HEK293 (cell line): ENCODE measurements at regions of chr17 and their contacts with region 1.

Region 1: GRCh38 chr17:41688699-41689496 is at the start of gene EIF1:
- H3K4me3 ChIP-seq: peak within 1 kb of the TSS; percentile 96
- H3K27ac ChIP-seq: peak within 1 kb of the TSS; percentile 89
- H3K4me1 ChIP-seq: no peaks in the 10 kb centered on the region
- CTCF ChIP-seq: 0 out of 2 replicates have a peak, but pooled peaks have one; percentile 17

Region 2: DNA sequence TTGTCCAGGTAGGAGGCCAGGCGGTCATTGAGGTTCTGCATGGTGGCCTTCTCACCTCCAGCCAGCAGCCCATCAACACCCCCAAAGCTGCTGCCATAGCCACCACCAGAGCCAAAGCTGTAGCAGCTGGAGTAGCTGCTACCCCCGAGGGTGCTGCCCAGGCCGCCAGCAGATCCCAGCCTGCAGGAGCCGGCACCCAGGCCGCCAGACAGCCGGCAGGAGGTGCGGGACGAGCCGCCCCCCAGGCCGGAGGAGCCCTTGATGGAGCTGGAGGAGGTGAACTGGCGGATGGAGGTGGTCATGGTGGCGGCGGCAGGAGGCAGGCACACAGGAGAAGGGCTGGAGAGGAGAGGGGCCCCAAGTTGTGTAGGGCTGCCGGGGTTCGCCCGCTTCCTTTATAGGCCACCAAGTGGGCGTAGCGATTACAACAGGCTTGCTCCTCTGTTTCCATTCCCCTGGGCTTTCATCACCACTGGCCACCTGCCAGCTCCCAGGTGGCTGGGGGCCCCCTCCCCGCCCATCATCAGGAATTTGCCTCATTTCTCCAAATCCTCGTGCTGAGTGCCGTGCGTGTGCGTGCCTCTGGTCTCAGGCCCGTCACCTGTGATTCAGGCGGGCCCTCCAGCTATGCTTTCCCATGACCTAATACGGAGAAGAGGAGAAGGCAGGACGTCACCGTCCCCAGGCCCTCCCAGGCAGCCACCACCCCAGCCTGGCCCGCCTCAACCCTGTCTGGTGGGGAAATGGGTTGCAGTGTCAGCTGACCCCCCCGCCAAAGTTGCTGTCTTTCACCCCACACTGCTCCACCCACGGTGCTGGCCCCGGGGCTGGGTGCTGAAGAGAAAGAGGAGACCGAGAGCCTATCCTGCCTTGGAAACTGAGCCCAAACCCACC is 64.4 kb before region 1 on chr17 and contains the start of gene KRT17:
- CTCF ChIA-PET with region 1: no interaction called
- POLR2A ChIA-PET with region 1: interaction called, 19 read pairs
- H3K4me3 ChIP-seq: peak within 1 kb of the TSS; percentile 26
- H3K27ac ChIP-seq: no peak within 1 kb of the TSS
- H3K4me1 ChIP-seq: peaks cover 2% of the 10 kb centered on the region; the same call in 1 of the 2 replicates
- CTCF ChIP-seq: no peak

Region 3: GRCh38 chr17:41710468-41711090 is 21.7 kb after region 1 on chr17:
- CTCF ChIA-PET with region 1: interaction called, 103 read pairs
- POLR2A ChIA-PET with region 1: interaction called, 24 read pairs
- H3K4me3 ChIP-seq: no peak overlapping the region
- H3K27ac ChIP-seq: no peak overlapping the region
- H3K4me1 ChIP-seq: no peaks in the 10 kb centered on the region
- CTCF ChIP-seq: no peak

Region 4: DNA sequence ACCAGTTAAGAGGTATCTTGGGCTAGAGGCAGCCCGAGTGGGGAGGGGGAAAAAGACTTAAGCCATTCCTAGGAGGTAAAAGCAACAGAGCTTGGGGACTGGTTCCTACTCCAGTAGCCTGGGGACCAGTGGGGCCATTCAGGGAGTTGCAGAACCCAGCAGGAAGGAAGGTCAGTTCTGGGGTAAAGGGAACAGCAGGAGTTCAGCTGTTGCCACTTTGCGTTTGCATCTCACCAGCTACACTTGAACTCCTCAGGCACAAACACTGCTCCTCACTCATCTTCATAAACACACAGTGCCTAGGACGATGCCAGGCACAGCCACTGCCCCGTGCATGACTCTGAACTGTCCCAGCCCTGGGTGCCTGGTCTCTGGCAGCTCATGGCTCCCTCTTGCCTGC is 41.6 kb after region 1 on chr17:
- CTCF ChIA-PET with region 1: interaction called, 3 read pairs
- POLR2A ChIA-PET with region 1: interaction called, 21 read pairs
- H3K4me3 ChIP-seq: no peak overlapping the region
- H3K27ac ChIP-seq: no peak overlapping the region
- H3K4me1 ChIP-seq: no peaks in the 10 kb centered on the region
- CTCF ChIP-seq: no peak

Region 5: GRCh38 chr17:41801374-41802271 is 112.7 kb after region 1 on chr17:
- CTCF ChIA-PET with region 1: interaction called, 4 read pairs
- POLR2A ChIA-PET with region 1: interaction called, 20 read pairs
- H3K4me3 ChIP-seq: peak overlapping the region; percentile 10; the same call in 1 of the 2 replicates
- H3K27ac ChIP-seq: no peak overlapping the region; the same call in 1 of the 2 replicates
- H3K4me1 ChIP-seq: peaks cover 6% of the 10 kb centered on the region
- CTCF ChIP-seq: peak; percentile 93

Region 6: GRCh38 chr17:41918314-41919164 is 229.6 kb after region 1 on chr17 and contains the start of gene ACLY:
- CTCF ChIA-PET with region 1: no interaction called
- POLR2A ChIA-PET with region 1: interaction called, 18 read pairs
- H3K4me3 ChIP-seq: peak within 1 kb of the TSS; percentile 88
- H3K27ac ChIP-seq: peak within 1 kb of the TSS; percentile 91
- H3K4me1 ChIP-seq: peaks cover 21% of the 10 kb centered on the region
- CTCF ChIP-seq: no peak; the same call in 1 of the 2 replicates